Naive thymus-derived CD8-positive, alpha-beta T cell (primary cell): ENCODE measurements at regions of chr19 and their contacts with region 1.

Region 1: DNA sequence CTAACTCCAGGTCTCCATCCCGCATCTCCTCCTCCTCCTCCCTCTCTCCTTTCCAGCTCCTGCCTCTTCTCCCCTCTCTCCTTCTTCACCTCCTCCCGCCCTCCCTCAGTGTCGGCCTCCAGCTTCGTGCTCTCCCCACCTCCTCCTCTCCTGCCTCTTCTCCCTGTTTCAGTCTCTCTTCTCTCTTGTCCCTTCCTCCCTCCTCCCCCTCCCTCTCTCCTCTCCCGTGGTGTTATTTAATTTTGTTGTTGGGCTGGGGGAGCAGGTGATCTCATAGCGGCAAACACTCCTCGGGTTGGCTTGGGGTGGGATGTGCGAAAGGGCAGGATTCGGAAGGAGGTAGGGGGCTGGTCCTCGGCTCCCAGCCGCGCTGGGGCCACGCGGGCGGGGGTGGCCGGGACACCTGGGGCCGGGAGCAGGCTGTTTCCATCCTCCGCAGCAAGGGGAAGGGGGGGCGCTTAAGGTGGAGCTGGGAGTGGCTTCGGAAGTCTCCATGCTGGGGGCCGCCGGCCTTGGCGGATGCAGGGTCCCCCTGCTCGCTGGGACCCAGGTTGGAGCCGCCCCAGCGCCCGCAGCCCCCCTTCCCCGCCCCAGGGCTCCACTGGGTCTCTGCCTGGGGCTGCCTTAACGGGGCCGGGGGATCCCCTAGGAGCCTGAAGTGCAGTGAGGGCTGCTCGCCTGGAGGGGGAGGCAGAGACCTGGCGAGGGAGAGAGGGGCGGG is at the start of gene CA11:
- DNase-seq: peak; percentile 87 to 99 (median 93)
- ATAC-seq: peak; percentile 81 to 82
- H3K4me3 Mint-ChIP-seq: peak within 1 kb of the TSS; percentile 92 to 99 (median 94)
- H3K27ac Mint-ChIP-seq: peak within 1 kb of the TSS; percentile 82 to 98 (median 94)
- H3K4me1 Mint-ChIP-seq: peaks cover 33 to 54% (median 50%) of the 10 kb centered on the region in 4 donors
- H3K27me3 Mint-ChIP-seq: no peaks in the 10 kb centered on the region
- polyA plus RNA-seq, gene CA11: 6.6 to 14.1 (median 7.2) TPM

Region 2: DNA sequence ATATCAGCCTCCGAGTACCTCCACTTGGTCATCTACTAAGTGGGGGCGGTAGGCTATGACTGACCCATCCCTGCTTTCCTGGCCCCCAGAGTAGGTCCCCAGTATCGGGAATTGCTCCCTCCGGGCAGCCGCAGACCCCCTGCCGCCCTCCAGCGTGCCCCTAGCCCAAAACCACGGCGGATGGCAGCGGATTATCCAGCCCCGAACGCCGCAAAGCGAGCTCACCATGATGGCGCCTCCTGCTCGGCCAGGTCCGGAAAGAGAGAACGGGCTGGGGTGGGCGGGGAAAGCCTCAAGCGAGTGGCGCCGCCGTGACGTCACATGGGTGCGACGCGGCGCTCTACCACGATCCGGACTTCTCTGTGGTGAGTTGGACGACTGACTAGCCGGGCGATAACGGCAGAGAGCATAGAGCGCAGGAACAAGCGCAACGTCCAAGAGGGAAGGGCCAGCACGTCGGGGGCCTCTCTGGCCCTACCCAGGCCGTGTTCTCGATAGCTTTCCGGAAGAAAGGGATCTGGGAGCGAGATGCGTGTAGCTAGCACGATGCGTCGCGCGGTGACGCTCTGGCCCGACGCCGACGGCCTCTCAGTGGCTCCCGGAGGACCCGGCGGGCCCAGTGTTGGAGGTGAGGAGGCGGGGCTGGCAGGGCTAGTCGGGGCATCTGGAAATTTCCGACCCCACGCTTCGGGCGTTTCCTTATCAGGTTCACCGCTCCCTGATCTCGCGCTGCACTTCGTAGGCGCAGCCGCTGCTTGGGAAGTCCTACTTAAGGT is 27.1 kb before region 1 on chr19 and contains the starts of genes RPL18 and SPHK2:
- POLR2A ChIA-PET with region 1: interaction called, 70 read pairs
- DNase-seq: peak; percentile 88 to 97 (median 93)
- ATAC-seq: peak; percentile 77 to 78
- H3K4me3 Mint-ChIP-seq: peak within 1 kb of the TSS; percentile 94 to 99 (median 96)
- H3K27ac Mint-ChIP-seq: peak within 1 kb of the TSS; percentile 94 to 99 (median 98)
- H3K4me1 Mint-ChIP-seq: peaks cover 28 to 66% (median 47%) of the 10 kb centered on the region in 4 donors
- H3K27me3 Mint-ChIP-seq: no peaks in the 10 kb centered on the region
- polyA plus RNA-seq, gene RPL18: 2,610 to 3,008 (median 2,848) TPM
- polyA plus RNA-seq, gene SPHK2: 7.5 to 9.1 (median 8.3) TPM

Region 3: GRCh38 chr19:48624067-48624594 is 22.0 kb before region 1 on chr19:
- POLR2A ChIA-PET with region 1: interaction called, 70 read pairs
- DNase-seq: peak; percentile 83 to 96 (median 90)
- ATAC-seq: peak; percentile 75 to 80
- H3K4me3 Mint-ChIP-seq: peak overlapping the region; percentile 80 to 98 (median 87)
- H3K27ac Mint-ChIP-seq: peak overlapping the region; percentile 90 to 98 (median 94)
- H3K4me1 Mint-ChIP-seq: peaks cover 30 to 55% (median 44%) of the 10 kb centered on the region in 4 donors
- H3K27me3 Mint-ChIP-seq: no peaks in the 10 kb centered on the region

Region 4: GRCh38 chr19:48630296-48631063 is 15.7 kb before region 1 on chr19:
- POLR2A ChIA-PET with region 1: interaction called, 42 read pairs
- DNase-seq: peak in 1 of 10 donors; percentile 57
- ATAC-seq: no peak
- H3K4me3 Mint-ChIP-seq: no peak overlapping the region
- H3K27ac Mint-ChIP-seq: peak overlapping the region in 6 of 10 donors; percentile 14 to 81 (median 72)
- H3K4me1 Mint-ChIP-seq: peaks cover 13 to 47% (median 44%) of the 10 kb centered on the region in 4 donors
- H3K27me3 Mint-ChIP-seq: no peaks in the 10 kb centered on the region

Region 5: DNA sequence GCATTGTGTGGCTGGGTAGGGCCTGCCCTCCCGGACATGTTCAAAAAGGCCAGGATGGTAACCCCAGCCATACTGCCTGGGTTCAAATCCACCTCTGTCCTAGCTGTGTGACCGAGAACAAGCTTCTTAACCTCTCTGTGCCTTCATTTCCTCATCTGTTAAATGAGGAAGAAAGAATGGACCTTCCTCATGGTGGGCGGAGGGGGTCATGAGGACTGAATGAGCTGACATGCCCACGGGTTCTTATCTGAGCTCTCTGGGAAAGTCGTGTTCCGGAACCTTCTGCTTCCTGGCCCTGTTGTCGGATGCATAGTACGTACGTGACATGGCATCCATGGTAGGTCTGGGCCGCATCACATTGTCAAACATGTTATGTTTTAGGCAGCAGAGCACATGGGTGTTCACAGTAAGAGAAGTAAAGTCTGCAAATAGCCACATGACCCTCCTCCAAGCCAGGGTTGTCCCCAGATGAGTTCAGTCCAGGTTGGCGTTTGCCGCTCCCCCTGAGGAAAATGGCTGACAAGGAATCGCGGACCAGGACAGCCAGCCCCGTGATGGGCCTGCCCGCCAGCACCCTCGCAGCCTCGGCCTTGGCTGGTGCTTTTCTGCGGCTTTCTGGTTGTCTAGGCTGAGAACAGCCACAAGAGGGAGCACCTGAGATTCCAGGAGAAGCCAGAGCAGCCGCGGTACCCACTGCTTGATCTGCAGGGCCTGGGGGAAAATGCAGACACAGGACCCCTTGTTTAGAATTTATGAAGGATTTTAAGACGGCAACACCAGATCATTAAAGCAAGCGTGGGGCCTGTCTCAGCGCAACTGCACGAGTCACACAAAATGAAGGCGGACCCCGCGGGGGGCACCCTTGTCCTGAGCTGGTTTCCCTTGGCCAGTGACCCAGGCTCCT is 29.0 kb after region 1 on chr19:
- POLR2A ChIA-PET with region 1: interaction called, 24 read pairs
- DNase-seq: peak; percentile 50 to 85 (median 74)
- ATAC-seq: peak; percentile 97 to 99
- H3K4me3 Mint-ChIP-seq: no peak overlapping the region
- H3K27ac Mint-ChIP-seq: peak overlapping the region in 5 of 10 donors; percentile 8 to 54 (median 34)
- H3K4me1 Mint-ChIP-seq: peaks cover 3 to 11% (median 6%) of the 10 kb centered on the region in 4 donors
- H3K27me3 Mint-ChIP-seq: no peaks in the 10 kb centered on the region

Region 6: GRCh38 chr19:48720613-48721296 is 74.6 kb after region 1 on chr19:
- POLR2A ChIA-PET with region 1: interaction called, 11 read pairs
- DNase-seq: peak; percentile 77 to 96 (median 87)
- ATAC-seq: peak; percentile 82 to 92
- H3K4me3 Mint-ChIP-seq: peak overlapping the region; percentile 89 to 98 (median 96)
- H3K27ac Mint-ChIP-seq: peak overlapping the region; percentile 96 to 99 (median 98)
- H3K4me1 Mint-ChIP-seq: peaks cover 13 to 26% (median 25%) of the 10 kb centered on the region in 4 donors
- H3K27me3 Mint-ChIP-seq: no peaks in the 10 kb centered on the region